ENCODE measurements at regions of chr2 and their contacts with region 1.

Region 1: GRCh38 chr2:188524519-188525113 is 232.9 kb downstream of the GULP1 start:
- DNase-seq: peak; percentile 25
- ATAC-seq: no peak

Region 2: DNA sequence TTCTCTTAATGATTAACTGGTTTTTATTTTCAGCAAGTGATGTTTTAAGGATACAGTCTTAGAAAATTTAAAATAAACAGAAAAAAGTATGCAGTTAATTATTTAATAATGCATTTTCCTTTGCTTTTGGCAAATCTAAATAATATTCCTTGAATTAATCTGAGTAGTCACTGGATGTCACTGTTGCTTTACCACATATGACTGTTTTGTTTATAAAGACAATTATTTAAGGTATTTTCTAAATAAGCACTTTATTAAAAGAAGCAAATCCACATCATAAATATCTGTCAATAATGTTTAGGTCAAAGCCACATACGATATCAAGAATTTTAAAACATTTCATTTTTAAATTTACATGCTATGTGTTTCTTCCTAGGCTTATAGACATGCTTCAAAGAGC is 929.8 kb before region 1 on chr2:
- intact Hi-C with region 1: no loop called
- DNase-seq: no peak
- ATAC-seq: no peak

Region 3: DNA sequence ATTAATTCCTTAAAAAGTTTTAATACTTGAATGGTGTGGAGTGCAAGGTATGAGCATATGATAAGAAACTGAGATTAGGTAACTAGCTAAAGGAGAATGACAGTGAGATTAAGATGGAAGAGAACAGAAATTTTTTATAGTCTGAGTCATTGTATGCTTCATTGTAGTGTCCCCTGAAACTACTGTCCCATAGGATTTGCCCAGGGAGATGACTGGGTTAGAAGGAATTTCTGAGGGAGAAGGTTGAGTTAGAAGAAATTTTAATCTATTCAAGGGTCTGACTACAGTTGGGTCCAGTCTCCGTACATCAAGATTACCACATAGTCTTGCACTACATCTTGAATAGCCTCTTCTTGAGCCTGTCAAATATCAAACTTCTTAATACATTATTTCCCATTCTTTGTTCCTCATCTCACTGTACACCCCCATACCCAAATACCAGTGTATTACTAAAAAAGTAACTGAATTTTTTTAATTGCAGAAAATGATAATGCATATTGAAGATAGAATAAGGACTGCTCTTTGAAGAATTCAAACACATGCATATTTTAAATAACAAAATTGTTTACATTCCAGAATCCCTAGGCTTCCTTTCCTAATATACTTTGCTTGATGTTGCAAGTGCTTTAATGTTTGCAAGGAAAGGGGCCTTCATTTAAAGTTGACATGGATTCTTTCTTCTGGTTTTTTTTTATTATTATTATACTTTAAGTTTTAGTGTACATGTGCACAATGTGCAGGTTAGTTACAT is 135.2 kb after region 1 on chr2:
- intact Hi-C with region 1: no loop called
- DNase-seq: no peak
- ATAC-seq: no peak

Region 4: GRCh38 chr2:188978291-188979081 is 453.9 kb after region 1 on chr2:
- intact Hi-C with region 1: loop called (anchors 10 kb)
- DNase-seq: no peak
- ATAC-seq: peak; percentile 55

Region 5: GRCh38 chr2:189210250-189211075 is 685.8 kb after region 1 on chr2:
- intact Hi-C with region 1: no loop called
- DNase-seq: peak; percentile 42
- ATAC-seq: peak; percentile 84

Region 6: GRCh38 chr2:189412330-189412953 is 887.8 kb after region 1 on chr2:
- intact Hi-C with region 1: loop called (anchors 5 kb)
- DNase-seq: no peak
- ATAC-seq: peak; percentile 71